Testis (tissue), 5 donors: ENCODE measurements at regions of chr12 and their contacts with region 1.

Region 1: DNA sequence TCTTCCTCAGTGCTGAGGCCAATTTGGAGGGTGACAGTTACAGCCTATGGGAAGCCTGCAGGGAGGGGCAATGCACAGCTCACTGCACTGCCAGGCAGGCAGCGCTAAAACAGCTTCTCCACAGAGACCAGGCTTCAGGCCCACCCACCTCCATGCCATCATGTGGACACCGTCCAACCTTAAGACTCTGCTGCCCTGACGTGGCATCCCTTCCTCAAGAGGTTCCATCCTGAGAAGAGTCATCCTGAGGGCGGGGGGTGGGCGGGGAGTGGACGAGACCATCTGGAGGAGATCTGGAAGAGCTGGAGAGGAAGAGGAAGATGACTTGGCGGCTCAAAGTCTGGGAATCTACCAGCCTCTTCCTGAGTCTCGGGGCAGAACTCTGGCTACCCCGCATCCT is 8.4 kb upstream of the ACVRL1 start:
- DNase-seq: no peak
- H3K4me3 ChIP-seq: no peak overlapping the region
- H3K27ac ChIP-seq: no peak overlapping the region
- H3K4me1 ChIP-seq: no peaks in the 10 kb centered on the region
- H3K27me3 ChIP-seq: no peaks in the 10 kb centered on the region
- CTCF ChIP-seq: no peak
- POLR2A ChIP-seq: no peak

Region 2: DNA sequence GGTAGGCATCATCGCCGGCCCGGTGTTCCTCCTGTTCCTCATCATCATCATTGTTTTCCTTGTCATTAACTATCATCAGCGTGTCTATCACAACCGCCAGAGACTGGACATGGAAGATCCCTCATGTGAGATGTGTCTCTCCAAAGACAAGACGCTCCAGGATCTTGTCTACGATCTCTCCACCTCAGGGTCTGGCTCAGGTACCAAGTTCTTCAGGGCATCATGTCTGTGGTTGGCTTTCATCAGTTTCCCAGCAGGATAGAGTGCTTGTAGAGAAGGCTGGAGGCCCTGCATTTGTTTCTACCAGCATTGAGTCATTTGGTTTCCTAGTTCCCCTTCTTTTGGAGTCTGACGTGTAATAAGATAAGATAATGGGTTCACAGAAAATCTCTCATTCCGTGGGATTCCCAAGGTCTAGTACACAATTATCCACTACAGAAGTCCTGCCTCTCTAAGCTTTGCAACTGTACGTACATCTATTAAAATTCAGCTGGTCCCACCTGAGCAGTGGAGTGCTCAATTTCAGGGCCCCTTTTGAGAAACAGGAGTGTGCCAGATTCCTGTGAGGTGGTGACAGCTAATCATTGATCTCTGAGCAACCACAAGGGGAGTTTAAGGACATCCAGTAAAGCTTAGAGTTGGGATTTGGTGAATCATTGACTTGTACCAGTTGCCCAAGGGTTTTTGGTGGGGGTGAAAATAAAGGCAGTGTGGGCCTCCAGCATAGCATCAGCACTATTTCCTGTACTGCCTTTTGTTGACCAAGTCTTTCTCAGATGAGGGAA is 77.6 kb after region 1 on chr12:
- intact Hi-C with region 1: loop called (anchors 5 kb)
- DNase-seq: no peak
- H3K4me3 ChIP-seq: no peak overlapping the region
- H3K27ac ChIP-seq: no peak overlapping the region
- H3K4me1 ChIP-seq: peaks cover 9% of the 10 kb centered on the region
- H3K27me3 ChIP-seq: no peaks in the 10 kb centered on the region
- CTCF ChIP-seq: no peak
- POLR2A ChIP-seq: no peak